Mammary epithelial cell (primary cell): ENCODE measurements at regions of chr3 and their contacts with region 1.

Region 1: GRCh38 chr3:171838218-171838761 is 4.9 kb upstream of the TMEM212 start:
- DNase-seq: peak; percentile 23
- H3K4me3 ChIP-seq: no peak overlapping the region
- H3K27ac ChIP-seq: no peak overlapping the region
- H3K4me1 ChIP-seq: peaks cover 5% of the 10 kb centered on the region
- H3K27me3 ChIP-seq: no peaks in the 10 kb centered on the region
- CTCF ChIP-seq: no peak

Region 2: GRCh38 chr3:171703756-171704401 is 134.4 kb before region 1 on chr3:
- CTCF ChIA-PET with region 1: no interaction called
- dilution Hi-C with region 1: no loop called
- in situ Hi-C with region 1: loop called in 1 of 2 experiments (anchors 5 kb)
- intact Hi-C with region 1: no loop called
- DNase-seq: peak; percentile 49
- H3K4me3 ChIP-seq: no peak overlapping the region
- H3K27ac ChIP-seq: no peak overlapping the region
- H3K4me1 ChIP-seq: no peaks in the 10 kb centered on the region
- H3K27me3 ChIP-seq: no peaks in the 10 kb centered on the region
- CTCF ChIP-seq: peak; percentile 71 to 80